CD4-positive, alpha-beta memory T cell (primary cell): ENCODE measurements at regions of chr7 and their contacts with region 1.

Region 1: DNA sequence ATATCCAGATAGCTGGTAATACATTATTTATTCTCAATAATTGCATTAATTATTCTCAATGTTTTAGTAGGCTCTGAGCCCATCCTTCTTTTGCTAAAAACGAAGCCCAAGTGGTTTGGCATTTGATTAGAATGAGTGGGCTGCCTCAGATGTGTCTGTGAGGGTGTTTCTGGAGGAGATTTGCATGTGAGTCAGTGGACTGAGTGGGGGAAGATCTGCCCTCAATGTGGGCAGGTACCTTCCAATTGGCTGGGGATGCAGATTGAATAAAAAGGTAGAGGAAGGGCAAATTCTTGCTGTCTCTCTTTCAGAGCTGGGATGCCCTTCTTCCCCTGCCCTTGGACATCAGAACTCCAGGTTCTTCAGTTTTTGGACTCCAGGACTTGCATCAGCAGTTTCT is 290.6 kb upstream of the SMIM30 start:
- DNase-seq: no peak
- H3K4me3 ChIP-seq: no peak overlapping the region
- H3K4me3 Mint-ChIP-seq: no peak overlapping the region
- H3K27ac ChIP-seq: no peak overlapping the region
- H3K27ac Mint-ChIP-seq: no peak overlapping the region
- H3K4me1 ChIP-seq: no peaks in the 10 kb centered on the region
- H3K4me1 Mint-ChIP-seq: no peaks in the 10 kb centered on the region
- H3K27me3 ChIP-seq: peaks cover under 1% of the 10 kb centered on the region
- H3K27me3 Mint-ChIP-seq: no peaks in the 10 kb centered on the region

Region 2: DNA sequence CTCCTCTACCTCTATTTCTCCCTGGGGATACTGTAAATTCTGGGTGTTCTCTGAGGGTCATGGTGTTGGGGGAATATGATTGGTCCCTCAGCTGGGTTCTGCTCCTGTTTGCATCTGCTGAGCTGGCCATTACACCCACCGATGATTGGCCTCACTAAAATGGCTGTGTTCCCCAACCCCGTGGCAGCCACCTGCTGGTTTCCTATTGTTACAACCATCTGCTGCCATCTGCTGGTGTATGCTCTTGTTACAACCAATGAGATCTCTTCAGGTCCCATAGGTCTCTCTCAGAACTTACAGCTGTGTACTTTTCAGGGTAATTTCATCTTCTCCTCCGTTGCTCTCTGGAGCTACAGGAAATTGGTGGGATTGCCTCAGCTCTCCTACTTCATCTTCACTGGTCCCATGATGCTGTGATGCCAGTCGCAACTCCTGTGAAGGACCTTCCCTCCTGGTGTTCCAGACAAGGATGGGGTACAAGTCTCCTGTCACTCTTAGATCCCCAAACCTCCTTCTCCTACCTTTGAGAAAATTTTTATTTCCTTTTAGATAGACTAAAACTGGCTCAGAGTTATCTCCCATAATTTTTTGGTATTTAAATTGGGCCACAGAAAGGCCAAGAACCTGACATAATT is 12.8 kb after region 1 on chr7:
- CTCF ChIA-PET with region 1: interaction called, 10 read pairs
- POLR2A ChIA-PET with region 1: no interaction called
- intact Hi-C with region 1: no loop called
- DNase-seq: peak; percentile 62 to 72 (median 68)
- H3K4me3 ChIP-seq: no peak overlapping the region
- H3K4me3 Mint-ChIP-seq: peak overlapping the region in 4 of 8 donors; percentile 46 to 78 (median 64)
- H3K27ac ChIP-seq: no peak overlapping the region
- H3K27ac Mint-ChIP-seq: peak overlapping the region in 2 of 7 donors; percentile 43 to 64
- H3K4me1 ChIP-seq: peaks cover 3% of the 10 kb centered on the region
- H3K4me1 Mint-ChIP-seq: peaks cover 3 to 5% (median 4%) of the 10 kb centered on the region in 4 donors
- H3K27me3 ChIP-seq: no peaks in the 10 kb centered on the region
- H3K27me3 Mint-ChIP-seq: peaks cover 0 to 2% of the 10 kb centered on the region in 2 donors